ENCODE measurements at regions of chr6 and their contacts with region 1.

Region 1: GRCh38 chr6:85482905-85483700 is 33.2 kb downstream of the NT5E start:
- DNase-seq: peak; percentile 91
- ATAC-seq: peak; percentile 96
- H3K4me3 Mint-ChIP-seq: no peak overlapping the region
- H3K27ac Mint-ChIP-seq: peak overlapping the region; percentile 36
- H3K4me1 Mint-ChIP-seq: peaks cover 17% of the 10 kb centered on the region
- H3K27me3 Mint-ChIP-seq: no peaks in the 10 kb centered on the region
- CTCF ChIP-seq: peak; percentile 99

Region 2: GRCh38 chr6:83804886-83805285 is 1678.2 kb before region 1 on chr6:
- CTCF ChIA-PET with region 1: no interaction called
- POLR2A ChIA-PET with region 1: no interaction called
- intact Hi-C with region 1: no loop called
- DNase-seq: no peak
- ATAC-seq: no peak
- H3K4me3 Mint-ChIP-seq: no peak overlapping the region
- H3K27ac Mint-ChIP-seq: no peak overlapping the region
- H3K4me1 Mint-ChIP-seq: no peaks in the 10 kb centered on the region
- H3K27me3 Mint-ChIP-seq: peaks cover 5% of the 10 kb centered on the region
- CTCF ChIP-seq: no peak

Region 3: DNA sequence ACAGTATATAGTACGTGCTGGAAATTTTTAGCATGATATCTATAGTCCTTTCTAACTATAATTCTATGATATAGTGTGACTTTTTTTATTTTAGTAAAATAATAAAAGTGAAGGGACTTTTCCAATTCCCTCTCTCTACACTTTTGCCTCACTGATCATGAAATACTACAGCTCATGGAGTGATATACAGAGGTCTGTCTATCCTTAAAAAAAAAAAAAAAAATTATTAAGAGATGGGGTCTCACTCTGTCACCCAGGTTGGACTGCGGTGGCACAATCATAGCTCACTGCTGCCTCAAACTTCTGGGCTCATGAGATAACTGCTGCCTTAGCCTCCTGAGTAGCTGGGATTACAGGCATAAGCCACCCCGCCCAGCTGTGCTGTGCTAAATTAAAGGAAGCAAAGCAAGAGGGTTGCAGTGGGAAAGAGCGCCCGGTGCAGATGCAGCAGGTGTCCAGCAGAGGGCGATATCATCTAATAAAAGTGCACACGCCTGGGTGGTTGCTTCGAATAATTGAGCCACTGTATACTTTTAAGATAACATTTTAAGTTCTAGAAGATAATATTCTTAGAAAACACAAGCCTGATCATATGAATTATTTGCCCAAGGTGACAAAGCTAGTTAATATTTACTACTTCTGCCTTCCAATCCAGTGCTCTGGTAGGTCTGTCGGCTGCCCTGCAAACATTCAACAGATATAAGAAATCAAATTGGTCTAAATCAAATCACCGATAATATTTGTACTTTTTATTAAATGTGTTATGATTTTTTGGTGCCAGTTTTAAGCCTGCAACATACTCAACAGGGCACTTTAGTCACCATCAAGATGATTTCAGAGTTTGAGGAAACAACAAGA is 128.1 kb before region 1 on chr6:
- CTCF ChIA-PET with region 1: interaction called, 180 read pairs
- POLR2A ChIA-PET with region 1: interaction called, 9 read pairs
- intact Hi-C with region 1: loop called (anchors 1 kb)
- DNase-seq: peak; percentile 79
- ATAC-seq: peak; percentile 89
- H3K4me3 Mint-ChIP-seq: no peak overlapping the region
- H3K27ac Mint-ChIP-seq: no peak overlapping the region
- H3K4me1 Mint-ChIP-seq: no peaks in the 10 kb centered on the region
- H3K27me3 Mint-ChIP-seq: peaks cover 2% of the 10 kb centered on the region
- CTCF ChIP-seq: peak; percentile 91

Region 4: GRCh38 chr6:85389151-85389797 is 93.8 kb before region 1 on chr6:
- CTCF ChIA-PET with region 1: interaction called, 14 read pairs
- POLR2A ChIA-PET with region 1: no interaction called
- intact Hi-C with region 1: no loop called
- DNase-seq: peak; percentile 78
- ATAC-seq: peak; percentile 85
- H3K4me3 Mint-ChIP-seq: no peak overlapping the region
- H3K27ac Mint-ChIP-seq: peak overlapping the region; percentile 22
- H3K4me1 Mint-ChIP-seq: peaks cover 25% of the 10 kb centered on the region
- H3K27me3 Mint-ChIP-seq: peaks cover 1% of the 10 kb centered on the region
- CTCF ChIP-seq: no peak

Region 5: GRCh38 chr6:85443349-85444119 is 39.6 kb before region 1 on chr6:
- CTCF ChIA-PET with region 1: interaction called, 364 read pairs
- POLR2A ChIA-PET with region 1: interaction called, 7 read pairs
- intact Hi-C with region 1: no loop called
- DNase-seq: no peak
- ATAC-seq: no peak
- H3K4me3 Mint-ChIP-seq: no peak overlapping the region
- H3K27ac Mint-ChIP-seq: no peak overlapping the region
- H3K4me1 Mint-ChIP-seq: peaks cover 25% of the 10 kb centered on the region
- H3K27me3 Mint-ChIP-seq: no peaks in the 10 kb centered on the region
- CTCF ChIP-seq: no peak

Region 6: GRCh38 chr6:85498596-85499258 is 15.6 kb after region 1 on chr6:
- CTCF ChIA-PET with region 1: interaction called, 59 read pairs
- POLR2A ChIA-PET with region 1: no interaction called
- intact Hi-C with region 1: no loop called
- DNase-seq: no peak
- ATAC-seq: peak; percentile 19
- H3K4me3 Mint-ChIP-seq: no peak overlapping the region
- H3K27ac Mint-ChIP-seq: no peak overlapping the region
- H3K4me1 Mint-ChIP-seq: peaks cover 21% of the 10 kb centered on the region
- H3K27me3 Mint-ChIP-seq: no peaks in the 10 kb centered on the region
- CTCF ChIP-seq: no peak